Transverse colon (tissue), 4 donors: ENCODE measurements at regions of chr19 and their contacts with region 1.

Region 1: DNA sequence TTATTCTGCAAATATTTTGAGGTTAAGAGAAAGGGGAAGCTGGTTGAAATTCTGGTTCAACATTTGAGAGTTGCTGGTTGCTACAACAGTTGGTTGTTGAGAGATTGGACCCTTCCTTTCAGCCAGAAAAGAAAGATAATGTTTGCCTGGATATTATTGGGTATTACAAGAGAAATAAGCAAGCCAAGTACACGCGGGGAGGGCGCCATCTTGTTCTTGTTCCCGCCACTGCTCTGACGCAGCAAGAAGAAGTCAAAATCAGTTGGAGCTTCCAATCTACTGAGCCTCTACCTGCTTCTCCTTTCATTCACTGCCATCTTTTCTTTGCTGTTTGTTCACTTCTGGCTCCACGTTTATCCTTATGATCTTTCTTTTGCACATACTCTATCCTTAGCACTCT is 18.4 kb downstream of the BSPH1 start:
- DNase-seq: no peak
- H3K4me3 ChIP-seq: no peak overlapping the region
- H3K27ac ChIP-seq: no peak overlapping the region
- H3K4me1 ChIP-seq: no peaks in the 10 kb centered on the region
- H3K27me3 ChIP-seq: no peaks in the 10 kb centered on the region
- CTCF ChIP-seq: no peak
- EP300 ChIP-seq: no peak
- POLR2A ChIP-seq: no peak

Region 2: DNA sequence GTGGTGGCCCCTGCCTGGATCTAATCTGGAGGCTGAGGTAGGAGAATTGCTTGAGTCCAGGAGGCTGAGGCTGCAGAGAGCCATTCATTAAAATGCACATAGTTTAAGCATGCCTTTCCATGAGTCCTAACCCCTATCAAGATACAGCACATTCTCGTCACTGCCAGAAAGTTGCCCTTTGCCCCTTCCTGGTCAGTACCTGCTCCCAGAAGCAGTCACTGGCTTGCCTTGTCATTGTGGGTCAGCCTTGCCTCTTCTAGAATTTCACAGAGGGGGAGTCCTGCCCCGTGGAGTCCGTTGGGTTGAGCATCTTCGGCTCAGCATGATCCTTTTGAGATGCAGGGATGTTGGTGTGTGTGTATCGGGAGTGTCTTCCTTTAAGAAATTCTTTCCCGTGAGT is 353.8 kb before region 1 on chr19:
- in situ Hi-C with region 1: no loop called
- intact Hi-C with region 1: no loop called
- DNase-seq: no peak
- H3K4me3 ChIP-seq: no peak overlapping the region
- H3K27ac ChIP-seq: peak overlapping the region in 1 of 4 donors; percentile 22
- H3K4me1 ChIP-seq: peaks cover 8 to 36% (median 24%) of the 10 kb centered on the region in 4 donors
- H3K27me3 ChIP-seq: no peaks in the 10 kb centered on the region
- CTCF ChIP-seq: no peak
- EP300 ChIP-seq: no peak
- POLR2A ChIP-seq: no peak

Region 3: GRCh38 chr19:47756953-47757608 is 216.4 kb before region 1 on chr19:
- in situ Hi-C with region 1: no loop called
- intact Hi-C with region 1: no loop called
- DNase-seq: peak; percentile 69
- H3K4me3 ChIP-seq: no peak overlapping the region
- H3K27ac ChIP-seq: peak overlapping the region; percentile 59 to 82 (median 76)
- H3K4me1 ChIP-seq: peaks cover 0 to 22% (median 12%) of the 10 kb centered on the region in 4 donors
- H3K27me3 ChIP-seq: no peaks in the 10 kb centered on the region
- CTCF ChIP-seq: no peak
- EP300 ChIP-seq: no peak
- POLR2A ChIP-seq: no peak

Region 4: DNA sequence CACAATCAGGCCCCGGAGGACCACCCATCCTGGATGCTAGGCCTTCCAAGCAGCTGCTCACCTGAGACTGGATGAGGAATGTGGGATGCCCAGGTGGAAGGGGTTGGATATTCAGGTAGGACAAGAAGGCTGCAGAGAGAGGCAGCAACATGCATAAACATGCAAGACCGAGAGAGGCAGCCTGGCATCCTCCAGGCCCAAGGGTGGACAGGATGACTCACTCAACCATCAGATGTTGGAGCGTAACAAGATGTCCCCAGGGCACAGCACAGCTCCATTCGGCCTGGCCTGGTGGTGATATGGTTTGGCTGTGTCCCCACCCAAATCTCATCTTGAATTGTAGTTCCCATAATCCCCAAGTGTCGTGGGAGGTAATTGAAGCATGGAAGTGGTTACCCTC is 80.3 kb after region 1 on chr19:
- in situ Hi-C with region 1: no loop called
- intact Hi-C with region 1: no loop called
- DNase-seq: no peak
- H3K4me3 ChIP-seq: no peak overlapping the region
- H3K27ac ChIP-seq: no peak overlapping the region
- H3K4me1 ChIP-seq: no peaks in the 10 kb centered on the region
- H3K27me3 ChIP-seq: no peaks in the 10 kb centered on the region
- CTCF ChIP-seq: no peak
- EP300 ChIP-seq: no peak
- POLR2A ChIP-seq: no peak

Region 5: GRCh38 chr19:48085904-48086864 is 112.7 kb after region 1 on chr19:
- in situ Hi-C with region 1: loop called in 2 of 4 experiments (anchors 25 kb)
- intact Hi-C with region 1: no loop called
- DNase-seq: no peak
- H3K4me3 ChIP-seq: no peak overlapping the region
- H3K27ac ChIP-seq: no peak overlapping the region
- H3K4me1 ChIP-seq: peaks cover 0 to 7% (median 0%) of the 10 kb centered on the region in 4 donors
- H3K27me3 ChIP-seq: no peaks in the 10 kb centered on the region
- CTCF ChIP-seq: no peak
- EP300 ChIP-seq: no peak
- POLR2A ChIP-seq: no peak

Region 6: DNA sequence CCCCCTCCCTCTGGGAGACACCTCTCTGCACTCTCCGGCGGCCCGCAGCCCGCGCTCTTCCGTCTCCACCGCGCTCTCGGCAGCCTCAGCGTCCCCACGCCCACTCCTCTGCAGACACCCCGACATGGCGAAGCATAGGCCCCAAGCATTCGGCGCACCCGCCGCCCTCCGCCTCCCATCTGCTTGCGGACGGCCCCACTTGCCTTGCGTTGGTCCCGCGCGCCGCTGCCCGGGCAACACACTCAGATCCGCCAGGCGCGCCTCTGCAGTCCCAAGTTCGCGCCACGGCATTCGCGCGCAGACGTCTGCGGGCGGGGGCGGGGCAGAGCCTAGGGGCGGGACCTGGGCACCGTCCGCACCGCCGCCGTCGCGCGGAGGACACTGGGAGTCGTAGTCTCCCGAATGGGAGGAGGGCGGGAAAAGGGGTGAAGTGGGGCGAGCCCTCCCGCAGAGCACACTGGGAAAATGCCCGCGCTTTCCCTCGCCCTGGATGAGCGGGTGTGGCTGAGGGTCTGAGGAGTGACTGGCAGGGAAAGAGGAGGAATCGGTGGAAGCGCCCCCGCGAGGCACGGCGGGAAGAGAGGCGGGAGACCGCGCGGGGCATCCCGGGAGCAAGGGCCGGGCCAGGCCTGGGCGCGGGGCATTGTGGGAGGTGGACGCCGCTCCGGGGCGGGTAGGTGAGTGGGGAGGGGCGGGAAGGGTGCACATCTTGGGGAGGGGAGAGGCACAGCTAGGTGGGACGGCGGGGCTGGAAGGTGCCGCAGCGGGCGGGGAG is 196.7 kb after region 1 on chr19 and contains the starts of genes LIG1 and ZSWIM9:
- in situ Hi-C with region 1: loop called in 1 of 4 experiments (anchors 25 kb)
- intact Hi-C with region 1: no loop called
- DNase-seq: peak; percentile 93
- H3K4me3 ChIP-seq: peak within 1 kb of the TSS; percentile 67 to 87 (median 76)
- H3K27ac ChIP-seq: peak within 1 kb of the TSS; percentile 87 to 99 (median 96)
- H3K4me1 ChIP-seq: peaks cover 0 to 17% (median 13%) of the 10 kb centered on the region in 4 donors
- H3K27me3 ChIP-seq: no peaks in the 10 kb centered on the region
- CTCF ChIP-seq: peak in 1 of 5 experiments; percentile 18
- EP300 ChIP-seq: no peak
- POLR2A ChIP-seq: peak; percentile 24
- total RNA-seq, gene LIG1: 14.3 to 71.4 (median 26.8) TPM
- total RNA-seq, gene ZSWIM9: 3.3 to 24.7 (median 5.2) TPM

Region 7: GRCh38 chr19:48190288-48190884 is 216.9 kb after region 1 on chr19:
- in situ Hi-C with region 1: no loop called
- intact Hi-C with region 1: no loop called
- DNase-seq: peak; percentile 26
- H3K4me3 ChIP-seq: no peak overlapping the region
- H3K27ac ChIP-seq: no peak overlapping the region
- H3K4me1 ChIP-seq: no peaks in the 10 kb centered on the region
- H3K27me3 ChIP-seq: no peaks in the 10 kb centered on the region
- CTCF ChIP-seq: no peak
- EP300 ChIP-seq: no peak
- POLR2A ChIP-seq: no peak

Region 8: DNA sequence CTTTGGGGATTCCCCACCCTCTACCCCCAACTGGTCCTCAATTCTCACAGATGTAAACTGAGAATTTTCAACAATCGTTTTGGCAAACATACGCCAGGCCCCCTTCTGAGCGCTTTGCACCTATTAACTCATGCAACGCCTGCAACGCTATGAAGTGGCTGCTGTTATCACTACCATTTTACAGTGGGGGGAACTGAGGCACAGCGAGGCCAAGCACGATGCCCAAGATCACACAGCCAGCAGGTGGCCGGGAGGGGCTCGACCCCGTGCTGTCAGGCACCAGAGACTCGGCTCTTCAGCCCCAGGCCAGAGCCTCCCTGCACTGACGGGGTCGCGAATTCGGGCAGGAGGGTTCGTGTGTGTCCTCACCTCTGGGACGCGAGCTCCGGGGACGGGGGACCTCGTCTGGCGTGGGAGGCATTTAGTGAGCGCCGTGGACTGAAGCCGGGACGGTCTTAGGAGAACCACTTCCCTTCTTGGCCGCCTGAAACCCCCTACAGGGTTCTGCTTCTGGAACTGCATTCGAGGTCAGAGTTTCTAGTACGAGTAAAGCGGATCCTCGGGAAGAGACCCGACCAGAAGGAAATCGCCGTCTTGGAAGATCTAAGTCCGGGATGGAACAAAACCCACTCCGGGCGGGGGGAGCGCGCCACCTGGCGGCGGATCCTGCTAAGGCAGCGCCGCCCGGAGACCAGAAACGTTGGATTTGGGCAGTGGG is 317.4 kb after region 1 on chr19:
- in situ Hi-C with region 1: loop called in 2 of 4 experiments (anchors 25 kb)
- intact Hi-C with region 1: no loop called
- DNase-seq: peak; percentile 75
- H3K4me3 ChIP-seq: peak overlapping the region in 3 of 4 donors; percentile 22 to 40 (median 34)
- H3K27ac ChIP-seq: no peak overlapping the region
- H3K4me1 ChIP-seq: peaks cover 4 to 9% (median 8%) of the 10 kb centered on the region in 4 donors
- H3K27me3 ChIP-seq: peaks cover 25% of the 10 kb centered on the region
- CTCF ChIP-seq: peak; percentile 93 to 99 (median 98)
- EP300 ChIP-seq: no peak
- POLR2A ChIP-seq: no peak